Testis (tissue), 5 donors: ENCODE measurements at regions of chr5 and their contacts with region 1.

Region 1: GRCh38 chr5:153964880-153965645 is 73.6 kb downstream of the FAM114A2 start:
- DNase-seq: peak; percentile 64
- H3K4me3 ChIP-seq: no peak overlapping the region
- H3K27ac ChIP-seq: no peak overlapping the region
- H3K4me1 ChIP-seq: no peaks in the 10 kb centered on the region
- H3K27me3 ChIP-seq: no peaks in the 10 kb centered on the region
- CTCF ChIP-seq: peak; percentile 81 to 89 (median 83)
- POLR2A ChIP-seq: no peak

Region 2: DNA sequence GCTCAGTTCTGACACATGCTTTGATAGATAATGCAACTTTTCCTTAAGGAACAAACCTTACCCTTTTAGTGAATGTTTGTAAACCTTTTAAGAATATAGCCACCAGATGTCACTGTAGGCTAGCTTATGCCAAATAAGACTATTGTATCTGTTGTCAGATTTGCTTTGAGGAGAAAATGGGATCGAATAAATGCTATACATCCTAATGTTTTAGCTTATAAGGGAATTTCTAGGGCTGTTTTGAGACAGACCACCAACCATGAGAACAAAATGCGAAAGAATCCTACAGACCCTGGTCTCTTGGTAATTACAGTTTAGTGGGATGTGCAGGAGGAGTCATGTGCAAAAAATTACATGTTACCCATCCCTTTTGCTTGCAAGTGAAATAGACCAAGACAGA is 1432.3 kb before region 1 on chr5:
- intact Hi-C with region 1: loop called (anchors 10 kb)
- DNase-seq: no peak
- H3K4me3 ChIP-seq: no peak overlapping the region
- H3K27ac ChIP-seq: no peak overlapping the region
- H3K4me1 ChIP-seq: no peaks in the 10 kb centered on the region
- H3K27me3 ChIP-seq: no peaks in the 10 kb centered on the region
- CTCF ChIP-seq: peak in 2 of 3 experiments; percentile 28 to 37
- POLR2A ChIP-seq: no peak

Region 3: DNA sequence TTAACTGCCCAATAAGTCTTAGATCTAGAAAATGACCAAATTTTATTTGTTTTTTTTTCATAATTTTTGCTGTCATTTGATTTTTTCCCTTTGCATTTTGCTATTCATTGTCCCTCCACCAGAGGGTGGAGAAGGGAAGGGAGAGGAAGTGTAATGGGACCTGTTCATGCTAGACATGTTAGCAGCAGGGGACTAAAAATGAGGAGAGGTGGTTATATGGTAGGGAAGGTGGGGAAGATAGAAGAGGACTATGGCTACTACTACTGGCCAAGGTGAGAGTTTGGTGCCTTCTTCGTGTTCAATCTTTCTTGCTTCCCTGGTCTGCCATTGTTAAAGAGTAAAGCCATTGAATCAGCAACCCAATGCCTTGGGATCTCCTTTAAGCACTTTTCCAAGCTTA is 468.2 kb before region 1 on chr5:
- intact Hi-C with region 1: loop called (anchors 5 kb)
- DNase-seq: no peak
- H3K4me3 ChIP-seq: no peak overlapping the region
- H3K27ac ChIP-seq: no peak overlapping the region
- H3K4me1 ChIP-seq: no peaks in the 10 kb centered on the region
- H3K27me3 ChIP-seq: no peaks in the 10 kb centered on the region
- CTCF ChIP-seq: peak; percentile 49 to 72 (median 70)
- POLR2A ChIP-seq: no peak

Region 4: DNA sequence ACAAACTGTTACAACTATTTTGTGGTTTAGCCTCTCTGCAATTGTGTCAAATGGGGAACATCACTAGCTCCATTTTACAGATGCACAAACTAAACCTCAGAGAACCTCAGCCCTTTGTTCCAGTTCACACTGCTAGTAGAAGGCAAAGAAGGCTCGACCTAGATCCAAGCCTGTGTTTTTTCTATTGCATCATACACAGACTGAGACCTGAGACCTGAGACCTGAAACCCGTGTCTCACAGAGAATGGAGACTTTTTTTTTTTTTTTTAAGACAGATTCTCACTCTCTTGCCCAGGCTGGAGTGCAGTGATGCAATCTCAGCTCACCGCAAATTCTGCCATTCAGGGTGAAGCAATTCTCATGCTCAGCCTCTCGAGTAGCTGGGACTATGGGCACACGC is 346.3 kb after region 1 on chr5:
- intact Hi-C with region 1: no loop called
- DNase-seq: no peak
- H3K4me3 ChIP-seq: no peak overlapping the region
- H3K27ac ChIP-seq: no peak overlapping the region
- H3K4me1 ChIP-seq: no peaks in the 10 kb centered on the region
- H3K27me3 ChIP-seq: no peaks in the 10 kb centered on the region
- CTCF ChIP-seq: no peak
- POLR2A ChIP-seq: no peak